ENCODE measurements at regions of chr6 and their contacts with region 1.

Region 1: GRCh38 chr6:133040094-133040802 is 200.9 kb upstream of the EYA4 start:
- DNase-seq: peak in 1 of 35 experiments; percentile 16
- ATAC-seq: no peak
- H3K4me3 ChIP-seq: no peak overlapping the region
- H3K4me3 Mint-ChIP-seq: no peak overlapping the region
- H3K27ac ChIP-seq: no peak overlapping the region
- H3K27ac Mint-ChIP-seq: no peak overlapping the region
- H3K4me1 ChIP-seq: no peaks in the 10 kb centered on the region
- H3K4me1 Mint-ChIP-seq: no peaks in the 10 kb centered on the region
- H3K27me3 ChIP-seq: peaks cover 0 to 7% of the 10 kb centered on the region in 2 experiments
- H3K27me3 Mint-ChIP-seq: peaks cover 0 to 5% of the 10 kb centered on the region in 2 donors

Region 2: GRCh38 chr6:133052465-133052864 is 12.2 kb after region 1 on chr6:
- CTCF ChIA-PET with region 1: interaction called in 1 of 2 experiments, 3 read pairs
- POLR2A ChIA-PET with region 1: interaction called in 1 of 2 experiments, 11 read pairs
- DNase-seq: no peak
- ATAC-seq: no peak
- H3K4me3 ChIP-seq: no peak overlapping the region
- H3K4me3 Mint-ChIP-seq: no peak overlapping the region
- H3K27ac ChIP-seq: no peak overlapping the region
- H3K27ac Mint-ChIP-seq: no peak overlapping the region
- H3K4me1 ChIP-seq: no peaks in the 10 kb centered on the region
- H3K4me1 Mint-ChIP-seq: no peaks in the 10 kb centered on the region
- H3K27me3 ChIP-seq: no peaks in the 10 kb centered on the region
- H3K27me3 Mint-ChIP-seq: peaks cover 0 to 4% of the 10 kb centered on the region in 2 donors

Measured in T-cell (primary cell).